Ascending aorta (tissue), 2 donors: ENCODE measurements at regions of chr11 and their contacts with region 1.

Region 1: DNA sequence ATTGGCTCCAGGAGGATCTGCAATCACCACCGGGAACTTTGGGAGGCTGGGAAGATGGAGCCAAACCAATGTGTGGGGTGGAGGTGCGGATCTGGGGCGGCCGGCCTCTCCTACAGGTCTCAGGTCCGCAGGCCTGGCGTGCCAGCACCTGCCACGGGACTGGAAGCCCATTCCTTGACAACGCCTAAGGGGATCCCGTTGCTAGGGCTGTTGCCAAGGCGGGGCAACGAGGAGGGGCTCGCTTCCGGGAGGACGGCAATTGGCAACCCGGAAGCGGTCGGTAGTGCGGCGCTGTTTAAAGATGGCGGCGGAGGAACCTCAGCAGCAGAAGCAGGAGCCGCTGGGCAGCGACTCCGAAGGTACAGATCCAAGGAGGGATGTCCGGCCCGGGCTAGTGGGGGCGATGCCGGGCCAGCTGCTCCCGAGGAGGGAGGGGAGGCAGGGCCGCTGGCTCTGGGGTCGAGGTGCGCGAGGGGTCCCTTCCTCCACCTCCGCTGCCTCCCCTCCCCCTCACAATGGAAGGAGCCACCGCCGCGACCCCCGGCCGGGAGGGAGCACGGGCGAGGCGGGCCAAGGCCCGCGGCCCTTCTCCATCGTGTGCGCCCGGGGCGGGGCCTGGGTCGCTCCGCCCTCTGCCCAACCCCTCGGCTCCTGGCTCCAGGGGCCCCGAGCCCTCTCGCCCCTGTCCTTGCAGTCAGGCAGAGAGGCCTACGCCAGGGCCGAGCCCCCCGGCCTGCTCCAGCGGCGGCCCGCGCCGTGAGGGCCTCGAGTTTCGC is at the start of gene OTUB1:
- DNase-seq: peak; percentile 63 to 95
- H3K4me3 ChIP-seq: peak within 1 kb of the TSS; percentile 74 to 89
- H3K27ac ChIP-seq: peak within 1 kb of the TSS; percentile 67 to 82
- H3K4me1 ChIP-seq: peaks cover 12 to 14% of the 10 kb centered on the region in 2 donors
- H3K27me3 ChIP-seq: no peaks in the 10 kb centered on the region
- CTCF ChIP-seq: no peak
- total RNA-seq, gene OTUB1: 89.4 TPM

Region 2: DNA sequence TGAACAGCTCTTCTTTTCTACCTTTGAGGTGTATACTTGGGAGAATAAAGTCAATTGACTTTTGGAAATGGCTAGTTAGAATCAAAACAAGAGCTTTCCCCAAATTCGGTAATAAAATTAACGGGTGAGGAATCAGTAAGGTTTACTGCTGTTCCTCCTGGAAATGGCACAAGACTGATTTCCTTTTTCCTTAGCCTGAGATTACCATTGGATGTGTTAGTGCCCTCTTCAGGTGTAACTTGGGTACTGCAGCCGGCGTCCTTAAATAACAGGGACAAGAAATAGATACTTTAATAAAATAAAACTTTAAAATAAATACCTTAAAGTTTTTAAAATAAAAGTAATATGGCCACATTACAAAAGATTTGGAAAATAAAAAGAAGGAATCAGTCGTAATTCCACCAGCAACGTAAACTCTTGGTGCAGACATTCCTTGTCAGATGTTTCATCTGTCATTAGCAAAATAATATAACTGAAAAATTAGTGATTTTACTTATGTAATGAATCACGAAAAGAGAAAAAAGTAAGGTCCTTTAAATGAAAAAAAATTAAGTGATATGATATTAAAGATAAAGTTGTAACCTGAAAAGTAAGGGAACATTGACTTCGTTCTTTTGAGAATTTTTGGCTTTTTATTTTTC is 247.5 kb before region 1 on chr11:
- intact Hi-C with region 1: no loop called
- DNase-seq: peak in 1 of 2 donors; percentile 89
- H3K4me3 ChIP-seq: no peak overlapping the region
- H3K27ac ChIP-seq: peak overlapping the region; percentile 3 to 64
- H3K4me1 ChIP-seq: no peaks in the 10 kb centered on the region
- H3K27me3 ChIP-seq: no peaks in the 10 kb centered on the region
- CTCF ChIP-seq: peak; percentile 73 to 98 (median 96)

Region 3: DNA sequence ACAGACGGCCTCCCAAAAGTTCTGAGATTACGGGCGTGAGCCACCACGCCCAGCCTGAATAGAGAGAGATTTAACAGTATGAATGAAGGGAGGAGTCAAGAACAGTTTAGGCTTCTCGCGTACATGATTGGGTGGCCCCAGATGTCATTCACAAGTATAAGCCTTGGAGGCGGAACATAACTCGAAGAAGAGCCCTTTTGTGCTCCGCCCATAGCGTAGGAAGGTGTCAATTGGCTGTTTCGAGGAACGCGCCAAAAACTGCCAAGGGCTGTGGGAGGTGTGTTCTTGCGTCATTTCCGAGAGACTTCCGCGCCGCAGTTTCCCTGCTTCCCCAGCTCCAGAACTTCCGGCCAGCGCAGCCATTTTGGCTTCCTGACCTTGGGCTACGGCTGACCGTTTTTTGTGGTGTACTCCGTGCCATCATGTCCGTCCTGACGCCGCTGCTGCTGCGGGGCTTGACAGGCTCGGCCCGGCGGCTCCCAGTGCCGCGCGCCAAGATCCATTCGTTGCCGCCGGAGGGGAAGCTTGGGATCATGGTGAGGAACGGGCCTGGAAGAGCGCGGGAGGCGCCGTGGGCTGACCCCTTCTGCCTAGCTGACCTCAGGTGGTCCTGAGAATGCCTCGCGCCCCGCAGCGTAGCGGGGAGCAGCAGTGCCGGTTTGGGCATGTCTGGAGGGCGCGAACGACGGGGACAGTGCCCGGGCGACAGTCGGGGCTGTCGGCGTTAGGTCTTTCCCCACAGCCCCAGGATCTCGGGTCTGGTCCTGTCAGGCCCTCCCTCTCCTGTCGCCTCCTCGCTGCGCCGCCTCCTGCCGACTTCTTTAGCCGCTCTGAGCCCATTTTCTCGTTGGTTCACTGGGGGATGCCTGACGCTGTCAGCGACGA is 11.8 kb before region 1 on chr11 and contains the start of gene COX8A:
- intact Hi-C with region 1: loop called (anchors 1 kb)
- DNase-seq: peak; percentile 96 to 99
- H3K4me3 ChIP-seq: peak within 1 kb of the TSS; percentile 94 to 96
- H3K27ac ChIP-seq: peak within 1 kb of the TSS; percentile 96
- H3K4me1 ChIP-seq: peaks cover 14 to 15% of the 10 kb centered on the region in 2 donors
- H3K27me3 ChIP-seq: no peaks in the 10 kb centered on the region
- CTCF ChIP-seq: no peak
- total RNA-seq, gene COX8A: 520 TPM